ENCODE measurements at regions of chr13 and their contacts with region 1.

Region 1: GRCh38 chr13:46736541-46737310 is 60.2 kb downstream of the ESD start:
- DNase-seq: no peak
- ATAC-seq: no peak
- H3K4me3 ChIP-seq: no peak overlapping the region
- H3K27ac ChIP-seq: no peak overlapping the region
- H3K4me1 ChIP-seq: peaks cover 0 to 6% (median 0%) of the 10 kb centered on the region in 9 donors
- H3K27me3 ChIP-seq: no peaks in the 10 kb centered on the region
- CTCF ChIP-seq: no peak

Region 2: DNA sequence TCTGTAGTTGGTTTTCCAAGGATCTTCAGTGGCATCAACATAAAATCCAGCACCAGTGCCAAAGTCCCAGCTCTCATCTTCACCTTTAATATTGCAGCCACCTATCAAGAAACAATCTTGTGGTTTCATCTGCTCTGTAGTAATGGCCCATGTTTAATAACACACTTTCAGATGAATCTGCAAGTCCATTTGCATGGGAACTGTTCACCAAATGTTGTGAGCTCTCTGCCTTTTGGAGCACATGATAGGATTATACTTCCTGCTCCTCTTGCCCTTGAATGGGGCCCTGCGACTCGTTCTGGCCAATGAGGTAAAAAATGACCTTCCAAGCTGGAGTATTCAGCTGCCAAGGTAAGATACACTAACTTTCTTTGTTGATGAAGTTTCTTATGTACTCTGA is 46.0 kb after region 1 on chr13:
- intact Hi-C with region 1: loop called in 1 of 10 experiments (anchors 10 kb)
- DNase-seq: no peak
- ATAC-seq: no peak
- H3K4me3 ChIP-seq: no peak overlapping the region
- H3K27ac ChIP-seq: no peak overlapping the region
- H3K4me1 ChIP-seq: peaks cover 0 to 13% (median 0%) of the 10 kb centered on the region in 9 donors
- H3K27me3 ChIP-seq: no peaks in the 10 kb centered on the region
- CTCF ChIP-seq: no peak